SK-N-SH (cell line): ENCODE measurements at regions of chr2 and their contacts with region 1.

Region 1: DNA sequence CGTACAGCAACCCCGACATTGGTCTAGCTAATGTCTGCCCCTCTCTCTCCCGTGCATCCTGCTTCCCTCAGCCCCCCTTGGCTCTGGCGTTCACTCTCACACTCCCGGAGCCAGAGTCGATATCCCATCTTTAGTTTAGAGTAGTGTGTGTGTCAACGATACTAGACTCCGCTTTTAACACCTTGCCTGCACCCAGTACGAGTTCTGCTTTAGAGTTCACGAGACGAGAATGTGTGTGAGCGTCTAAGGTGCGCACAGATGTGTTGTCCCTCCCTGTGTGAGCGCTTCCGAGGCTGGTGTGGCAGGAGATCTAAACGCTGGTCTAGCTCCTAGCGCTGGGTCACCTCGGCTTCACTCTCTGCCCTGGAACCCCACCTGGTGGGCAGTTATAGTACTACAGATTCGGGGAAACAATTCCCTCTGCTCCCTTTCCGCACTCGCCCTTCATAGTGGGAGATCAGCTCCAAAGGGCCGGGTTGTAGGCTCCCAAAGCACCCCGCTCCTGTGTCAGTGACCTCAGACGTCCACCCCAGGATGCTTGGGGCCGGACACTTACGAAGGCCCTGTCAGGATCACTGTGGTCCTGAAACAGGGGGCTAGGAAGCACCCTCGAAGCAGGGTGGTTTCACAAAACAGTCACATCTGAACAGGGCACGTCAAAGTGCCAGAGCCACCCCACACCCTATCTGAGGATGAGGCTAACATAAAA is 2.6 kb upstream of the CYP26B1 start:
- DNase-seq: peak; percentile 87
- H3K4me3 ChIP-seq: peak overlapping the region; percentile 35 to 43
- H3K27ac ChIP-seq: no peak overlapping the region
- H3K4me1 ChIP-seq: peaks cover 5 to 26% of the 10 kb centered on the region in 2 experiments; a peak in 2 of 4 replicates
- H3K27me3 ChIP-seq: peaks cover 39% of the 10 kb centered on the region
- CTCF ChIP-seq: peak; percentile 74
- EP300 ChIP-seq: no peak
- RAD21 ChIP-seq: peak; percentile 88

Region 2: GRCh38 chr2:71536226-71536671 is 614.1 kb before region 1 on chr2:
- CTCF ChIA-PET with region 1: interaction called, 14 read pairs
- POLR2A ChIA-PET with region 1: no interaction called
- DNase-seq: no peak
- H3K4me3 ChIP-seq: no peak overlapping the region
- H3K27ac ChIP-seq: no peak overlapping the region
- H3K4me1 ChIP-seq: no peaks in the 10 kb centered on the region
- H3K27me3 ChIP-seq: no peaks in the 10 kb centered on the region
- CTCF ChIP-seq: no peak
- EP300 ChIP-seq: no peak
- RAD21 ChIP-seq: no peak

Region 3: DNA sequence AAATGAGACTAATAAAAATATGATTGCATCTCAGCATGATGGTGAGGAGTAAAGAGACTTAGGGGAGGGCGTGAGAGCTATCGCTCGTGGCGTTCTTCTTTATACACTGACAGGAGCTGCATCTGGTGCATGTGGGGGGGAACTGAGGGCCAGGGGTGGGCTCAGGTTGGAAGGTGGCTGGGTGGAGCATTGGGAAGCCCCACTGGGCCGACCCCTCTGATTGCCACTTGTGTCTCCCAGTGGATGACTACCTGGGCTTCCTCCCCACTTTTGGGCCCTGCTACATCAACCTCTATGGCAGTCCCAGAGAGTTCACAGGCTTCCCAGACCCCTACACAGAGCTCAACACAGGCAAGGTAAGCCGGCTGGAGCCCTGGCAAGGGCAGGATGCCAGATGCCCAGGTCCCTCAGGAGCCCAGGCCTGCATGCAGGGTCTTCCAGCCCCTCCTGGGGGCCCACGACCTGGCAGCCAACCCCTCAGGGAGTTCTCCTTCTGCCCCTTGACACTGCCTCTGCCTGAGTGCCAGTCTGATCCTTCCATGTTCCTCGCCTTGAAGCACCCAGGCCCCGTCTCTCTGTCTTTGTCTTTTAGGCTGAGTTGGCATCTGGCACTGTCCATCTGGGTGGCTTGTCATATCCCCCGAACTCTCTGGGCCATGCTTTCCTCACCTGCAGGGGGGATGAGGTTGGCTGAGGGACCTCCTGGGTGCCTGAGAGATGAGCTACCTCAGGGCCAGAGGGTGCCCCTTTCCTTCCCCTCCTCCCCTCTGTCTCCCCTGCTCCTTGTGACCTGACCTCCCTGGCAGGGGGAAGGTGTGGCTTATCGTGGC is 599.3 kb before region 1 on chr2:
- CTCF ChIA-PET with region 1: interaction called, 70 read pairs
- POLR2A ChIA-PET with region 1: no interaction called
- DNase-seq: no peak
- H3K4me3 ChIP-seq: no peak overlapping the region
- H3K27ac ChIP-seq: no peak overlapping the region
- H3K4me1 ChIP-seq: no peaks in the 10 kb centered on the region; a peak in 1 of 4 replicates
- H3K27me3 ChIP-seq: no peaks in the 10 kb centered on the region; the same call in 1 of the 2 replicates
- CTCF ChIP-seq: no peak
- EP300 ChIP-seq: no peak
- RAD21 ChIP-seq: no peak

Region 4: DNA sequence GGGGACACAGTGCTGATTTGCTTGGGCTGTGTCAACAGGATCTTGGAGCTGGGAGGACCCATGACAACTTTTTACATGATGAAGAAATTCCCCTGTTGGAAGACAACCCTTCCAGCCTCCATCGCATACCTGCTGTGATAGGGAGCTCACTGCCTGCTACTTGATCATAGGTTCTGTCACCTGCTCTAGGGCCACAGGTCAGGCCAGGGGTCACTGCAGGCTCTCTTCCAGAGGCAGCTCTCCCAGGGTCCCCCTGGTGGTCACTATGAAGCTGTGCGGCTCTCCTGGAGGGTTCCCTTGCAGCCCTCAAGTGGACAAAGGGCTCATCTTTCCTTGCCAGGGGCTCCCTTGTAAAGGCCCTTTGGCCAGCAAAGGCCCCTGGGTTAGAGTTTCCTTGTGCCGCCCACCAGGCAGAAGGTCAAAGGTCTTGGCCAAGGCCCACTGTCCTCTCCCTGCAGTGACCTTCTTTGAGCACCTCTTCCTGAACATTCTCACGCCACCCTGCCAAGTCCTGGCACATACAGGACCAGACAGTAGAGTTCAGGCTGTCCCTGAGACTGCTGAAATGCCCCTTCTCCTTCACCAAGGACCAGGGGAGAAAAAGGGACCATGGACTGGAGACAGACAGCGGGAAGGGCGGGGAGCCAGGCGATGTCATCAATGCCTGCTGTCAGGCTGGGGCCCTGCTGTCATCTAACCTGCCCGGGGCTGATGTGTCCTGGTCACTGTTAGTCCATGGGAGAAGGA is 351.9 kb before region 1 on chr2:
- CTCF ChIA-PET with region 1: interaction called, 16 read pairs
- POLR2A ChIA-PET with region 1: no interaction called
- DNase-seq: peak; percentile 64
- H3K4me3 ChIP-seq: no peak overlapping the region
- H3K27ac ChIP-seq: no peak overlapping the region
- H3K4me1 ChIP-seq: peaks cover 0 to 10% of the 10 kb centered on the region in 2 experiments; a peak in 1 of 4 replicates
- H3K27me3 ChIP-seq: no peaks in the 10 kb centered on the region
- CTCF ChIP-seq: peak; percentile 78
- EP300 ChIP-seq: no peak
- RAD21 ChIP-seq: peak; percentile 61

Region 5: GRCh38 chr2:71923887-71924533 is 226.3 kb before region 1 on chr2:
- CTCF ChIA-PET with region 1: interaction called, 167 read pairs
- POLR2A ChIA-PET with region 1: no interaction called
- DNase-seq: peak; percentile 73
- H3K4me3 ChIP-seq: no peak overlapping the region
- H3K27ac ChIP-seq: no peak overlapping the region
- H3K4me1 ChIP-seq: peaks cover 0 to 6% of the 10 kb centered on the region in 2 experiments; a peak in 1 of 4 replicates
- H3K27me3 ChIP-seq: no peaks in the 10 kb centered on the region
- CTCF ChIP-seq: peak; percentile 75
- EP300 ChIP-seq: no peak
- RAD21 ChIP-seq: peak; percentile 88

Region 6: DNA sequence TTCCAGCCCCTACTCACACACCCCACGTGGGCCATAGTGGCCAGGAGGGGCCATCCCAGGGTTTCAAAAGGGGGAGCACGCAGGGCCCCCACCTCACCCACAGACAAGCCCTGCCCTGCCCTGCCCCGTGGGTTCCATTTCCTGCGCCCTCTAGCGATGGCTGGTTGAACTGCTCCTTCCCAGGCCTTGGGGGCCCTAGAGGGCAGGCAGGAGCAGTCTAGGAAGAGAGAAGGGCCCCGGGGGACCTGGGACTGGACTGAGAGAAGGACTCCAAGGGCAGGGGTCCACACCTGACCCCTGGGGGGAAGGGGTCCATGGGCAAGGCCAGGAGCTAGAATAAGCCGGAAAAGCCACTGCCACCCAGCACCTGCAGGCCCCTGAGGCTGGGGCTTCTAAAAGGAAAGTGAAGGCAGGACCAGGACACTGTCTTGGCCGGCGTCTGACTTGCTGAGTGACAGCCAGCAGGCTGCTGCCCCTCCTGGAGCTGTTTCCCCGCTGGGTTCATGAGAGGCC is 12.8 kb before region 1 on chr2:
- CTCF ChIA-PET with region 1: interaction called, 58 read pairs
- POLR2A ChIA-PET with region 1: no interaction called
- DNase-seq: peak; percentile 87
- H3K4me3 ChIP-seq: peak overlapping the region in 1 of 2 experiments; percentile 36; a peak in 1 of 4 replicates
- H3K27ac ChIP-seq: no peak overlapping the region
- H3K4me1 ChIP-seq: no peaks in the 10 kb centered on the region
- H3K27me3 ChIP-seq: no peaks in the 10 kb centered on the region; the same call in 1 of the 2 replicates
- CTCF ChIP-seq: peak; percentile 95
- EP300 ChIP-seq: no peak
- RAD21 ChIP-seq: peak; percentile 54

Region 7: DNA sequence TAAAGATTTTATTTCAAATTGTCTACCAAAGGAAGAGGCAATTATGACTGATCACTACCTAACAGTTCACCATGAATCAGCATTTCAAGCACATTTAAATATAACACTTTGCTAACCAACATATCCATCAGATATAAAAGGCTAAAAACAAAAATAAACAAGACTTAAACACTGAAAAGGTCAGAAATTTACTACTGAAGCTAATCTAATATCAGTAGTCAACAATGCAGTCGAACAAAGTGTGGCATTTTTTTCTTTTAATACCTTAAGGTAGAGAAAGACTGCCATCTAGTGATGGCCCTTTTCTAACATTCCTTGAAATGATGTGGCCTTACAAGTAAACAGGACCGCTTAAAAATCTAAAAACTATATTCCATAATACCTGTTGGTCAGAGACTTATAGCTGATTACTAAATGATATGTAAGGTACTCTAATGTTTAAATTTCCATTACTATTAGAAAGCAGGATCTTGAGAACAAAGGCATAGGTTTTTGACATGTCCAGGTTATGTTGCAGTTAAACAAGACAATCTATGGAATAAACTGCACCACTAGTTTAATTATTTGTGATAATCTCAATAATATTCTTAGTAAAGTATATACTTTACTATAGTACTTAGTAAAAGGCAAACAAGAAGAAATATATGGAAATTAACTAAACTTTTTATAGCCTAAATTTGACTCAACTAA is 595.5 kb after region 1 on chr2:
- CTCF ChIA-PET with region 1: interaction called, 25 read pairs
- POLR2A ChIA-PET with region 1: no interaction called
- DNase-seq: peak; percentile 21
- H3K4me3 ChIP-seq: no peak overlapping the region
- H3K27ac ChIP-seq: no peak overlapping the region
- H3K4me1 ChIP-seq: peaks cover 0 to 12% of the 10 kb centered on the region in 2 experiments; a peak in 1 of 4 replicates
- H3K27me3 ChIP-seq: no peaks in the 10 kb centered on the region
- CTCF ChIP-seq: peak; percentile 85
- EP300 ChIP-seq: no peak
- RAD21 ChIP-seq: peak; percentile 86